CD8-positive, alpha-beta T cell (primary cell): ENCODE measurements at regions of chr10 and their contacts with region 1.

Region 1: GRCh38 chr10:84375011-84375410 is 46.6 kb downstream of the CCSER2 start:
- DNase-seq: peak in 5 of 9 experiments; percentile 24 to 79 (median 51)
- ATAC-seq: peak; percentile 74
- H3K4me3 ChIP-seq: no peak overlapping the region
- H3K4me3 Mint-ChIP-seq: no peak overlapping the region
- H3K27ac ChIP-seq: no peak overlapping the region
- H3K27ac Mint-ChIP-seq: peak overlapping the region; percentile 70
- H3K4me1 ChIP-seq: peaks cover 4% of the 10 kb centered on the region
- H3K4me1 Mint-ChIP-seq: peaks cover 60% of the 10 kb centered on the region
- H3K27me3 ChIP-seq: no peaks in the 10 kb centered on the region
- H3K27me3 Mint-ChIP-seq: no peaks in the 10 kb centered on the region
- CTCF ChIP-seq: peak; percentile 68

Region 2: GRCh38 chr10:84264611-84265141 is 110.3 kb before region 1 on chr10:
- CTCF ChIA-PET with region 1: interaction called, 35 read pairs
- POLR2A ChIA-PET with region 1: no interaction called
- intact Hi-C with region 1: loop called (anchors 1 kb)
- DNase-seq: peak; percentile 53 to 82 (median 75)
- ATAC-seq: peak; percentile 97
- H3K4me3 ChIP-seq: no peak overlapping the region
- H3K4me3 Mint-ChIP-seq: no peak overlapping the region
- H3K27ac ChIP-seq: no peak overlapping the region
- H3K27ac Mint-ChIP-seq: no peak overlapping the region
- H3K4me1 ChIP-seq: no peaks in the 10 kb centered on the region
- H3K4me1 Mint-ChIP-seq: peaks cover 11% of the 10 kb centered on the region
- H3K27me3 ChIP-seq: no peaks in the 10 kb centered on the region
- H3K27me3 Mint-ChIP-seq: peaks cover 23% of the 10 kb centered on the region
- CTCF ChIP-seq: peak; percentile 98

Region 3: GRCh38 chr10:84333864-84334451 is 41.1 kb before region 1 on chr10:
- CTCF ChIA-PET with region 1: interaction called, 6 read pairs
- POLR2A ChIA-PET with region 1: no interaction called
- intact Hi-C with region 1: loop called in 1 of 2 experiments (anchors 5 kb)
- DNase-seq: peak; percentile 51 to 96 (median 70)
- ATAC-seq: peak; percentile 76
- H3K4me3 ChIP-seq: peak overlapping the region; percentile 1 to 17
- H3K4me3 Mint-ChIP-seq: peak overlapping the region; percentile 51
- H3K27ac ChIP-seq: peak overlapping the region; percentile 57 to 86
- H3K27ac Mint-ChIP-seq: peak overlapping the region; percentile 91
- H3K4me1 ChIP-seq: peaks cover 66% of the 10 kb centered on the region
- H3K4me1 Mint-ChIP-seq: peaks cover 58% of the 10 kb centered on the region
- H3K27me3 ChIP-seq: no peaks in the 10 kb centered on the region
- H3K27me3 Mint-ChIP-seq: no peaks in the 10 kb centered on the region
- CTCF ChIP-seq: no peak

Region 4: DNA sequence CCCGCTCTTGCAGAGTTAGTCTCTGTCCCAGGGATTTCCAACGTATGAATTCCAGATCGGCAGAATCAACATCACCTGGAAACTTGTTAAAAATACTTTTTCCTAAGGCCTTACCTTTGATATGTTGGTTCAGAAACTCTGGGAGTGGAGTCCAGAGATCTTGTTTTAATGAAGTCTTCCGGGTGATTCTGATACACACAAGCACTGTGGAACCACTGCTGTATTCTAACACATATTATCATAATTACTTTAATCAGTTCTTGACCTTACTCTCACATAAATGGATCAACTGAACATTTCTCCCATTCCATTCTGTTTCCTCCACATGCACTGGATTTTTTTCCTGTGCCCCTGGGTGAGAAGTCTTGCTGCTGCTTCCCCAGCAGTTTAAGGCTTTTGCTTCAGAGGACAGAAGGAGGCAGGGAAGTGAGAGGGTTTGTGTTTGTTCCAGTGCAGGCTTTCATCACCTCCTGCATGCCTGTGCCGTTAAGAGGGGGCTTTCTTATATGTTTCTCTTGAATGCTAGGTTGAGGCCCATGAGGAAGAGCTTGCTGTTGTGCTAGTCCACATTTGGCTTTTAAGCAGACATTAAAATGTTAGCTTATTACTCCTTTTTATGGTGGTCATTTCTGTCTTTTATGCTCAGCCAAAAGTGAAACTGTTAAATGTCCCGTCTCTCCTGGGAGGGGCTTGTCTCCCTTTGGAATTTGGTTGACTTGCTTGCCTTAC is 14.2 kb before region 1 on chr10:
- CTCF ChIA-PET with region 1: interaction called, 9 read pairs
- POLR2A ChIA-PET with region 1: no interaction called
- intact Hi-C with region 1: loop called in 1 of 2 experiments (anchors 2 kb)
- DNase-seq: peak in 1 of 9 experiments; percentile 22
- ATAC-seq: no peak
- H3K4me3 ChIP-seq: no peak overlapping the region
- H3K4me3 Mint-ChIP-seq: peak overlapping the region; percentile 20
- H3K27ac ChIP-seq: no peak overlapping the region
- H3K27ac Mint-ChIP-seq: peak overlapping the region; percentile 66
- H3K4me1 ChIP-seq: peaks cover 58% of the 10 kb centered on the region
- H3K4me1 Mint-ChIP-seq: peaks cover 86% of the 10 kb centered on the region
- H3K27me3 ChIP-seq: no peaks in the 10 kb centered on the region
- H3K27me3 Mint-ChIP-seq: no peaks in the 10 kb centered on the region
- CTCF ChIP-seq: no peak

Region 5: DNA sequence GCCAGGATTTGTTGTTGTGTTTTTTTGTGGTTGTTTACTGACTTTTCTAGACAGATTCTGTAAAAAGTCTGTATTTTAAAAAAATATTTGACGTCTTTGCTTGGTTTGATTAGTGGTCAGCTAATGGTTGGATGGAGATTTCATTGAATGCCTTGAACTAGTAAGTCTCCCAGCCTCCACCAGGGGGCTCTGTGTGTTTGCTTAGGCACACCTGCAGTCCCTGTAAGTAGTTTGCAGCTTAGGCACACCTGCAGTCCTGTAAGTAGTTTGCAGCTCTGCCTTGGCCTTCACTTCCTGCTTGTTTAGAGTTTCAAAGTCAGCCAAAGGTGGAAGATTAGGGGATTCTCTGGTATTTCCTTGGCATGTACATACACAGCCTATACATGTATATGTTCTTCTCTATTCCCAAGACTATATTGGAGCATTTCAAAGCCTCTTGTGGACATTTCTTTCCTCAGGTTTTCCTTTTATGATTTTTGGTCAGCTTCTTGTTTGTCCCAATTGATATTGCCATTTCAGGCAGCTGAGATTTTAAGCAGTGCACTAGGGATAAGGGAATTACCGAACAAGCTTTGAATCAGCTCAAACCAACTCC is 55.0 kb after region 1 on chr10:
- CTCF ChIA-PET with region 1: interaction called, 3 read pairs
- POLR2A ChIA-PET with region 1: no interaction called
- intact Hi-C with region 1: loop called in 1 of 2 experiments (anchors 5 kb)
- DNase-seq: peak; percentile 32 to 75 (median 67)
- ATAC-seq: peak; percentile 87
- H3K4me3 ChIP-seq: no peak overlapping the region
- H3K4me3 Mint-ChIP-seq: no peak overlapping the region
- H3K27ac ChIP-seq: no peak overlapping the region
- H3K27ac Mint-ChIP-seq: peak overlapping the region; percentile 20
- H3K4me1 ChIP-seq: peaks cover 15% of the 10 kb centered on the region
- H3K4me1 Mint-ChIP-seq: peaks cover 64% of the 10 kb centered on the region
- H3K27me3 ChIP-seq: no peaks in the 10 kb centered on the region
- H3K27me3 Mint-ChIP-seq: no peaks in the 10 kb centered on the region
- CTCF ChIP-seq: peak; percentile 78

Region 6: GRCh38 chr10:86291616-86292340 is 1916.8 kb after region 1 on chr10:
- CTCF ChIA-PET with region 1: no interaction called
- POLR2A ChIA-PET with region 1: no interaction called
- intact Hi-C with region 1: no loop called
- DNase-seq: peak in 1 of 9 experiments; percentile 47
- ATAC-seq: no peak
- H3K4me3 ChIP-seq: no peak overlapping the region
- H3K4me3 Mint-ChIP-seq: no peak overlapping the region
- H3K27ac ChIP-seq: no peak overlapping the region
- H3K27ac Mint-ChIP-seq: no peak overlapping the region
- H3K4me1 ChIP-seq: no peaks in the 10 kb centered on the region
- H3K4me1 Mint-ChIP-seq: no peaks in the 10 kb centered on the region
- H3K27me3 ChIP-seq: no peaks in the 10 kb centered on the region
- H3K27me3 Mint-ChIP-seq: peaks cover 10% of the 10 kb centered on the region
- CTCF ChIP-seq: no peak